GM12878 (cell line): ENCODE measurements at regions of chr11 and their contacts with region 1.

Region 1: GRCh38 chr11:119624102-119624615 is 104.8 kb downstream of the NECTIN1 start:
- DNase-seq: no peak
- ATAC-seq: peak; percentile 53
- H3K4me3 ChIP-seq: no peak overlapping the region
- H3K27ac ChIP-seq: no peak overlapping the region
- H3K4me1 ChIP-seq: no peaks in the 10 kb centered on the region
- H3K27me3 ChIP-seq: peaks cover 0 to 3% of the 10 kb centered on the region in 2 experiments; a peak in 3 of 4 replicates
- CTCF ChIP-seq: peak; percentile 18 to 71 (median 47); a peak in 5 of 6 replicates
- EP300 ChIP-seq: no peak
- POLR2A ChIP-seq: no peak
- RAD21 ChIP-seq: no peak

Region 2: GRCh38 chr11:119594639-119595249 is 29.4 kb before region 1 on chr11:
- CTCF ChIA-PET with region 1: no interaction called
- POLR2A ChIA-PET with region 1: no interaction called
- RAD21 ChIA-PET with region 1: no interaction called
- SMC1A ChIA-PET with region 1: no interaction called
- in situ Hi-C with region 1: no loop called
- intact Hi-C with region 1: no loop called
- DNase-seq: no peak
- ATAC-seq: no peak
- H3K4me3 ChIP-seq: no peak overlapping the region
- H3K27ac ChIP-seq: no peak overlapping the region
- H3K4me1 ChIP-seq: no peaks in the 10 kb centered on the region
- H3K27me3 ChIP-seq: no peaks in the 10 kb centered on the region; a peak in 1 of 4 replicates
- CTCF ChIP-seq: no peak
- EP300 ChIP-seq: no peak
- POLR2A ChIP-seq: no peak
- RAD21 ChIP-seq: no peak

Region 3: DNA sequence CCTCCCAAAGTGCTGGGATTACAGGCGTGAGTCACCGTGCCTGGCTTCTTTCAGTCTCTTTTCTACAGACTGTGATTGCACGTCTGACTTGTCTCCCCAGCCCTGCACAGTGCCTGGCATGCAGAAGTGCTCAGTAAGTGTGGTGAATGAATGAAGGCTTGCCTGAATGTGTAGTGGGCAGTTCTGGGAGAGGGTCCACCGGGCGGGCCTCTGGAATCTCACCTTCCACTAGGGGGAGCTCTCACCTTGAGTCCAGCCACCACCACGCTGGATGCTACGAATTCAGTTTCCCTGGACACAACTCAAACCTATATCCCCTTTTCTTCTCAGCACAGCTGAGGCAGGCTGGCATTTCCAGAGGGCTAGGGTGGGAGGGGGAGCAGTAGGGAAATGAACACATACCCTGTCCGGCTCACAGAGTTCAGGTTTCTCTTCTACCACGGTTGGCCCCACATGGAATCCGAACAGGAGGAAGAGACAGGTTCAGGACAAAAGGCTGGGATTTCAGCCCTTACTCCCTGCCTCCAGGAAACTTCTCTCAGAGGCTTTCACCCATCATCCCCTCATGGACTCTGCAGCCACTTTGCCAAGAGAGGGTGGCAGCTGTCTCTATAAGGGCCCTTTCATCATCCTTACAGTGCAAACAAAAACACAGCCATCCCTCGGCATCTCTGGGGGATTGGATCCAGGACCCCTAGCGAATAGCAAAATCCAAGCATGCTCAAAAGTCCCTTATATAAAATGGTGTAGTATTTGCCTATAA is 18.0 kb after region 1 on chr11:
- CTCF ChIA-PET with region 1: interaction called, 14 read pairs
- POLR2A ChIA-PET with region 1: no interaction called
- RAD21 ChIA-PET with region 1: no interaction called
- SMC1A ChIA-PET with region 1: interaction called, 3 read pairs
- in situ Hi-C with region 1: no loop called
- intact Hi-C with region 1: no loop called
- DNase-seq: no peak
- ATAC-seq: peak; percentile 83
- H3K4me3 ChIP-seq: no peak overlapping the region
- H3K27ac ChIP-seq: no peak overlapping the region
- H3K4me1 ChIP-seq: no peaks in the 10 kb centered on the region
- H3K27me3 ChIP-seq: peaks cover 3% of the 10 kb centered on the region in 2 experiments; a peak in 3 of 4 replicates
- CTCF ChIP-seq: peak; percentile 63 to 75 (median 67)
- EP300 ChIP-seq: no peak
- POLR2A ChIP-seq: no peak
- RAD21 ChIP-seq: peak; percentile 49